ENCODE measurements at regions of chr1 and their contacts with region 1.

Region 1: GRCh38 chr1:35557292-35558063 is at the starts of genes KIAA0319L and NCDN:
- DNase-seq: peak; percentile 90 to 95
- ATAC-seq: peak; percentile 91 to 96
- H3K4me3 ChIP-seq: peak within 1 kb of the TSS; percentile 96
- H3K27ac ChIP-seq: peak within 1 kb of the TSS; percentile 99 to 100
- H3K4me1 ChIP-seq: peaks cover 32% of the 10 kb centered on the region; the same call in 2 of the 3 replicates
- CTCF ChIP-seq: no peak
- EP300 ChIP-seq: no peak
- POLR2A ChIP-seq: peak; percentile 89
- RAD21 ChIP-seq: no peak
- polyA plus RNA-seq, gene KIAA0319L: 36.9 and 41.9 TPM in 2 replicates
- polyA plus RNA-seq, gene NCDN: 7.0 and 8.0 TPM in 2 replicates

Region 2: GRCh38 chr1:35451125-35451528 is 106.4 kb before region 1 on chr1:
- CTCF ChIA-PET with region 1: interaction called, 10 read pairs
- POLR2A ChIA-PET with region 1: interaction called, 5 read pairs
- DNase-seq: peak; percentile 43 to 61
- ATAC-seq: peak; percentile 94 to 98
- H3K4me3 ChIP-seq: no peak overlapping the region
- H3K27ac ChIP-seq: no peak overlapping the region
- H3K4me1 ChIP-seq: peaks cover 2% of the 10 kb centered on the region; the same call in 1 of the 3 replicates
- CTCF ChIP-seq: peak; percentile 62
- EP300 ChIP-seq: no peak
- POLR2A ChIP-seq: no peak
- RAD21 ChIP-seq: peak; percentile 61

Region 3: GRCh38 chr1:35536556-35537162 is 20.8 kb before region 1 on chr1:
- CTCF ChIA-PET with region 1: no interaction called
- POLR2A ChIA-PET with region 1: no interaction called
- DNase-seq: no peak
- ATAC-seq: no peak
- H3K4me3 ChIP-seq: no peak overlapping the region
- H3K27ac ChIP-seq: no peak overlapping the region
- H3K4me1 ChIP-seq: no peaks in the 10 kb centered on the region
- CTCF ChIP-seq: no peak
- EP300 ChIP-seq: no peak
- POLR2A ChIP-seq: no peak
- RAD21 ChIP-seq: no peak

Region 4: GRCh38 chr1:35577071-35577998 is 19.9 kb after region 1 on chr1:
- CTCF ChIA-PET with region 1: interaction called, 15 read pairs
- POLR2A ChIA-PET with region 1: interaction called, 6 read pairs
- DNase-seq: no peak
- ATAC-seq: no peak
- H3K4me3 ChIP-seq: no peak overlapping the region
- H3K27ac ChIP-seq: no peak overlapping the region
- H3K4me1 ChIP-seq: no peaks in the 10 kb centered on the region
- CTCF ChIP-seq: no peak
- EP300 ChIP-seq: no peak
- POLR2A ChIP-seq: no peak
- RAD21 ChIP-seq: no peak

Region 5: GRCh38 chr1:35592991-35593694 is 35.7 kb after region 1 on chr1:
- CTCF ChIA-PET with region 1: no interaction called
- POLR2A ChIA-PET with region 1: no interaction called
- DNase-seq: no peak
- ATAC-seq: no peak
- H3K4me3 ChIP-seq: no peak overlapping the region
- H3K27ac ChIP-seq: no peak overlapping the region
- H3K4me1 ChIP-seq: no peaks in the 10 kb centered on the region
- CTCF ChIP-seq: no peak
- EP300 ChIP-seq: no peak
- POLR2A ChIP-seq: no peak
- RAD21 ChIP-seq: no peak

Region 6: DNA sequence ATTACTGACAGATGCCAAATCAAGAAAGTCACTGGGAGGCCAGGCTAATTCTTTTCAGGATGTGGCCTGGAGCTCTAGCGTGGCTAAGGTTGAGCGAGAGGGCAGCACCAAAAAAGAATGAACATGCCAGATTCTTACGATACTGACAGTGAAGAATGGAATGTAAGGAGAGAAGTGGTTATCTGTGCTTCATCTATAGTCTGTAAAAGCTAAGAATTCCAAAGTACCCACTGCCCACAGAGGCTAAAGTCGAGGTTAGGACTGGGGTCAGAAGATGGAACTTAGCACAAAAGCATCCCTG is 48.4 kb after region 1 on chr1:
- CTCF ChIA-PET with region 1: no interaction called
- POLR2A ChIA-PET with region 1: no interaction called
- DNase-seq: no peak
- ATAC-seq: no peak
- H3K4me3 ChIP-seq: no peak overlapping the region
- H3K27ac ChIP-seq: no peak overlapping the region
- H3K4me1 ChIP-seq: no peaks in the 10 kb centered on the region
- CTCF ChIP-seq: no peak
- EP300 ChIP-seq: no peak
- POLR2A ChIP-seq: no peak
- RAD21 ChIP-seq: no peak

Region 7: GRCh38 chr1:35656148-35656862 is 98.8 kb after region 1 on chr1:
- CTCF ChIA-PET with region 1: no interaction called
- POLR2A ChIA-PET with region 1: no interaction called
- DNase-seq: no peak
- ATAC-seq: no peak
- H3K4me3 ChIP-seq: no peak overlapping the region
- H3K27ac ChIP-seq: no peak overlapping the region
- H3K4me1 ChIP-seq: no peaks in the 10 kb centered on the region
- CTCF ChIP-seq: no peak
- EP300 ChIP-seq: no peak
- POLR2A ChIP-seq: no peak
- RAD21 ChIP-seq: no peak

Measured in A549 (cell line).